ENCODE measurements at regions of chr19 and their contacts with region 1.

Region 1: GRCh38 chr19:51660975-51661600 is 14.5 kb upstream of the SIGLEC14 start:
- DNase-seq: peak; percentile 40 to 80
- H3K4me3 ChIP-seq: no peak overlapping the region
- H3K4me1 ChIP-seq: no peaks in the 10 kb centered on the region
- H3K27me3 ChIP-seq: no peaks in the 10 kb centered on the region

Region 2: DNA sequence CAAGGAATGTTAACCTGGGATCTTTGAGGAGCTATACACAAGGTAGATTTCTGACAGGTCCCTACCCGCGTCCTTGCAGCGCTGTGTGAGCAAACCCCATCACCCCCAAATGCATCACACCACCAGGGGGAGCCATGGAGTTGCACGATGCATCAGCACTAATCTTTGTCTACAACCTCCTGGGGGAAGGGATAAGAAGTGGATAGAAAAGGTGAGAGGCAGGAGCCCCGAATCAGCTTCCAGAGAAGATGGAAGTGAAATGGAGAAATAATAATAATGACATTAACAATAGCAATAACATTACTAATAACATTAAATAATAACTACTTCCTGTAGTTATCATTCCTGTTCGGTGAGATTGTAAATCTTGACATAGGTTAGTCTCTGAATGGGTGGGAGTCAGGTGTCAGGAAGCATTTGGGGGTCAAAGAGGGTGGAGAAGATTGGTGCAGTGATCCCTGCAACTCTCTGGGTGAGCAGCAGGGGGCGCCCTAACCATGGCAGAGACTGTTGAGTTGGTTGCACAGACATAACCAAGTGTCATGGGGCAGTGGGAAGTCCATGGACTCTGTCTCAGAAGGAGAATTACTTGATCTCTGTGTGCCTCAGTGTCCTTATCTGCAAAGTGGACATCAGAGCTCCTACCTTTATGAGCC is 502.5 kb before region 1 on chr19:
- in situ Hi-C with region 1: loop called (anchors 25 kb)
- DNase-seq: peak; percentile 28 to 82
- H3K4me3 ChIP-seq: no peak overlapping the region
- H3K4me1 ChIP-seq: no peaks in the 10 kb centered on the region; the same call in 1 of the 2 replicates
- H3K27me3 ChIP-seq: no peaks in the 10 kb centered on the region

Region 3: GRCh38 chr19:51473009-51473707 is 187.9 kb before region 1 on chr19:
- in situ Hi-C with region 1: loop called (anchors 25 kb)
- DNase-seq: peak; percentile 15 to 86
- H3K4me3 ChIP-seq: no peak overlapping the region
- H3K4me1 ChIP-seq: no peaks in the 10 kb centered on the region
- H3K27me3 ChIP-seq: no peaks in the 10 kb centered on the region